ENCODE measurements at regions of chr16 and their contacts with region 1.

Region 1: GRCh38 chr16:66696669-66697630 is at the start of gene CMTM4:
- DNase-seq: peak; percentile 88 to 93 (median 90)
- ATAC-seq: peak; percentile 90 to 99 (median 97)
- H3K4me3 ChIP-seq: peak within 1 kb of the TSS; percentile 61 to 94 (median 78)
- H3K27ac ChIP-seq: peak within 1 kb of the TSS in 8 of 12 donors; percentile 32 to 77 (median 66)
- H3K4me1 ChIP-seq: peaks cover 0 to 30% (median 12%) of the 10 kb centered on the region in 12 donors
- H3K27me3 ChIP-seq: no peaks in the 10 kb centered on the region
- CTCF ChIP-seq: peak in 6 of 12 donors; percentile 15 to 57 (median 34)
- POLR2A ChIP-seq: peak in 1 of 2 donors; percentile 32
- total RNA-seq, gene CMTM4: 8.1 to 22.5 (median 12.2) TPM

Region 2: DNA sequence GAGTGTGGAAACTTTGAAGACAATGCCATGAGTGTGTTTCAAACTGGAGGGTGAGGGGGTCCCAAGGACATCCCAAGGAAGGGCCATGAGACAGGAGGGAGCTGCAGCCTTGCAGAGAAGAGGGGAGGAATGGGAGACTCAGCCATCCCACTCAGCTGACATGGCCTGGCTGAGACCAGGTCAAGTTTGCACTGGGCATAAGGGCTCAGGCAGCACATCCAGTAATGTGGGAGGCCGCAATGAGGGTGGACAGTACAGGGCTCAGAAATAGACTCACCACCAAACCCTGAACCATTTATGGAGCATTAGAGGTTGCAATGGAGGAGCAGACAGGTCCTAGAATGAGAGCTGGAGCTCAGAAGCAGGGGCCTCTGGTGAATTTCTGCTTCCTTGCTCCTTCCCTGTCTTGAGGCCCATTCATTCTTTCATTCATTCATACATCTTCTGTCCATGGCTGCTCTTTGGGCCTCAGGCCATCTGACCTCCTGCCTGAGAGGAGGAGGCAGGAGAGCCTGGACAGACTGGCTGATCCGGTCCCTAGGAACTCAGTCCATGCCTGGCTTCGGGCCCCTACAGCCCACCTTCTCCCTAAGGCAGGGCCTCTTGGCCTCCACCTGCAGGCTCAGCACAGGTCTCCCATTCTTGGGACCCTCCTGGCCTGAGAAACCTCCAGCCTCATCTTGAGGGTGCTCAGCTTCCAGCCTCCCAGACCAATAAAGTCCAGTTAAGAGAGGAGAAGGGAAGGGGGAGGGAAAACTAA is 401.0 kb before region 1 on chr16:
- intact Hi-C with region 1: no loop called
- DNase-seq: no peak
- ATAC-seq: no peak
- H3K4me3 ChIP-seq: no peak overlapping the region
- H3K27ac ChIP-seq: no peak overlapping the region
- H3K4me1 ChIP-seq: no peaks in the 10 kb centered on the region
- H3K27me3 ChIP-seq: peaks cover 0 to 6% (median 0%) of the 10 kb centered on the region in 9 donors
- CTCF ChIP-seq: no peak
- POLR2A ChIP-seq: no peak

Region 3: GRCh38 chr16:66618588-66619375 is 78.2 kb before region 1 on chr16:
- intact Hi-C with region 1: loop called in 1 of 10 experiments (anchors 10 kb)
- DNase-seq: no peak
- ATAC-seq: peak in 3 of 4 donors; percentile 55 to 80 (median 78)
- H3K4me3 ChIP-seq: no peak overlapping the region
- H3K27ac ChIP-seq: peak overlapping the region in 4 of 12 donors; percentile 14 to 34 (median 26)
- H3K4me1 ChIP-seq: peaks cover 0 to 30% (median 12%) of the 10 kb centered on the region in 12 donors
- H3K27me3 ChIP-seq: no peaks in the 10 kb centered on the region
- CTCF ChIP-seq: no peak
- POLR2A ChIP-seq: no peak

Region 4: DNA sequence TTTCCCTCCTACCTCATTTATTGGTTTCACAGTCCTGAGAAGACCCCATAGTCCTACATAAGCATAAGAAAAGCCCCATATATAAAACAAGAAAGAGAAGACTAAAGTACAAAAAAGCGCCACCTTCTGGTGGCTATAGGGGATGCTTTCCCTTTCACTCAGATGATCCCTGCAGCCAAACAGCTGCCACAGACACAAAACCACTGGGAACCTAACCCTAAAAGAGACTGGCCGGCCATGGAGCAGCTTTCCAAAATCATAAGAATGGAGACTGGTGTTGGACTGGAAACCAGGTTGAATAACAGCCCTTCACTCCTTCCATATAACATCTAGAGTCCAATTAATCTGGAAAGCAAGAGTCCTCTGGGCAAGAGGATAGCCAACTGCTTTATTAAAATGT is 43.1 kb after region 1 on chr16:
- intact Hi-C with region 1: loop called in 1 of 10 experiments (anchors 10 kb)
- DNase-seq: no peak
- ATAC-seq: no peak
- H3K4me3 ChIP-seq: no peak overlapping the region
- H3K27ac ChIP-seq: peak overlapping the region; percentile 42 to 94 (median 86)
- H3K4me1 ChIP-seq: peaks cover 13 to 64% (median 39%) of the 10 kb centered on the region in 12 donors
- H3K27me3 ChIP-seq: no peaks in the 10 kb centered on the region
- CTCF ChIP-seq: peak; percentile 35 to 67 (median 50)
- POLR2A ChIP-seq: no peak

Measured in heart left ventricle (tissue), 16 donors.